ENCODE measurements at regions of chr10 and their contacts with region 1.

Region 1: GRCh38 chr10:86389441-86390193 is 23.0 kb upstream of the GRID1 start:
- DNase-seq: peak; percentile 61 to 87 (median 75)
- ATAC-seq: peak; percentile 89 to 99 (median 94)
- H3K4me3 ChIP-seq: peak overlapping the region; percentile 20 to 40 (median 25)
- H3K27ac ChIP-seq: no peak overlapping the region
- H3K4me1 ChIP-seq: peaks cover 0 to 3% (median 0%) of the 10 kb centered on the region in 3 donors
- H3K27me3 ChIP-seq: no peaks in the 10 kb centered on the region
- CTCF ChIP-seq: no peak

Region 2: DNA sequence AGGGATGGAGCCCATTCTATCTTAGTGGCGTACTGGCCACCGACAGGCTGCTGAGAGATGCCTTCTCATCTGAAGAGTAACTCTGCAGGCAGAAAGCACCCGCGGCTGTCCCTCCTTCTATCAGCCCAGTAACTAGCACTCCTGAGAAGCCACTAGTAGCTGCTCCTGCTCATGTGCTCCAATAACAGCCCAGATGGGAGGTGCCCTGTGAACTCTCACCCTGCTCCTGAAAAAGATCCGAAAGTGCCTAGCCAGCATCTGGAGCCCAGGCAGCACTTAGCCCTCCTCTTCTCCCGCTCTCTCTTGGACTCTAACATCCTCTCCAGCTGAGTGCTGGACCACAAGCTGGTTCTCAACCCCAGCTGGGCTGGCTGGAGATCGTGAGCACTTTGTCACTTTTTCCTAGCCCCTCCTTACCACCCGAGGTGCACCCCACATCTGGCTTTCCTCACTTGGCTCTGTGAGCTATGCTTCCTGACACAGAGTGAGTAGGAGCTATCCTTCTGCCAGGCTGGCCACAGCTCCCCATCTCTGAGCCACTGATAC is 262.3 kb before region 1 on chr10:
- intact Hi-C with region 1: no loop called
- DNase-seq: no peak
- ATAC-seq: no peak
- H3K4me3 ChIP-seq: no peak overlapping the region
- H3K27ac ChIP-seq: no peak overlapping the region
- H3K4me1 ChIP-seq: no peaks in the 10 kb centered on the region
- H3K27me3 ChIP-seq: no peaks in the 10 kb centered on the region
- CTCF ChIP-seq: no peak

Region 3: GRCh38 chr10:86585037-86585725 is 195.6 kb after region 1 on chr10:
- intact Hi-C with region 1: loop called (anchors 5 to 10 kb)
- DNase-seq: peak; percentile 59 to 85 (median 75)
- ATAC-seq: peak; percentile 97 to 99 (median 98)
- H3K4me3 ChIP-seq: no peak overlapping the region
- H3K27ac ChIP-seq: no peak overlapping the region
- H3K4me1 ChIP-seq: no peaks in the 10 kb centered on the region
- H3K27me3 ChIP-seq: no peaks in the 10 kb centered on the region
- CTCF ChIP-seq: peak; percentile 92 to 99 (median 96)

Region 4: DNA sequence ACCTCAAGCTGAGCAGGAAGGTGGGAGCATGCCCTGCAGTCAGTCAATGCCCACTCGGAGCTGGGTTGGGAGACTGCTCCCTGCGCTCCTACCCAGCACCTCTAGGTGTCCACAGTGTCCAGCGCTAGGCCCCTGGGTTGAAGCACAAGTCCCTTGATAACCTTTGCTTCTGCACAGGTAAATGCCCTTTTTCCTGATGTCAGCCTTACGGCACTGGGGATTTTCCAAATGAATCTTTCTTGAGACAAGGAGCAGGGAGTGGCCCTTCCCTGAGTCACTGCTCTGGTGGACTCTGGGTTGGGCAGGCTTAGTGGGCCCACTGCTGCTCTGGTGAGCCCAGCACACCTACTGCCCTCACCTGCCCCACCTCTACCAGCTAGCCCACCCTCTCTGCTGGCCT is 202.8 kb after region 1 on chr10:
- intact Hi-C with region 1: loop called (anchors 5 to 10 kb)
- DNase-seq: no peak
- ATAC-seq: peak in 3 of 4 donors; percentile 43 to 85 (median 60)
- H3K4me3 ChIP-seq: no peak overlapping the region
- H3K27ac ChIP-seq: no peak overlapping the region
- H3K4me1 ChIP-seq: no peaks in the 10 kb centered on the region
- H3K27me3 ChIP-seq: no peaks in the 10 kb centered on the region
- CTCF ChIP-seq: no peak